A673 (cell line): ENCODE measurements at regions of chr3 and their contacts with region 1.

Region 1: GRCh38 chr3:105686278-105686897 is 182.4 kb downstream of the CBLB start:
- DNase-seq: peak; percentile 41
- H3K4me3 ChIP-seq: no peak overlapping the region
- H3K27ac ChIP-seq: no peak overlapping the region
- H3K4me1 ChIP-seq: peaks cover 27% of the 10 kb centered on the region
- H3K27me3 ChIP-seq: no peaks in the 10 kb centered on the region
- CTCF ChIP-seq: peak; percentile 91

Region 2: GRCh38 chr3:105210141-105210540 is 476.2 kb before region 1 on chr3:
- CTCF ChIA-PET with region 1: no interaction called
- POLR2A ChIA-PET with region 1: no interaction called
- intact Hi-C with region 1: no loop called
- DNase-seq: no peak
- H3K4me3 ChIP-seq: no peak overlapping the region
- H3K27ac ChIP-seq: no peak overlapping the region
- H3K4me1 ChIP-seq: no peaks in the 10 kb centered on the region
- H3K27me3 ChIP-seq: no peaks in the 10 kb centered on the region
- CTCF ChIP-seq: no peak

Region 3: DNA sequence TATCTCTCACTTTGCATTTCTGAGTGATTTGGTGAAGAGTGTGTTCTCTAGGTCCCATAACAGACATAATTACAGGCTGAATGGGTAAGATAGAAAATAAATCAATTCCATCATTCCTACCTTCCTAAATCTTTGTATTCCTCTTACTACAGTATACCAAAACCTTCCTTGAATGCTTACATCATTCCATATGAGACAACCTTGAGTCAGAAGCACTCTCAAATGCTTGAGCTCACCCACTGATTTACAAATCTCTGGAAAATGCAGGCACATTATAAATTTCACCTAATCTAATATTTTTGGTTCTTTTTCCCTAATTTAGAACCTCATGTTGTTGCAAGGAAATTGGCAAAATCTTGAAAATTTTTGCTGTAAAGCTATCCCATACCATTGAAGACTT is 56.7 kb before region 1 on chr3:
- CTCF ChIA-PET with region 1: no interaction called
- POLR2A ChIA-PET with region 1: no interaction called
- intact Hi-C with region 1: no loop called
- DNase-seq: no peak
- H3K4me3 ChIP-seq: no peak overlapping the region
- H3K27ac ChIP-seq: no peak overlapping the region
- H3K4me1 ChIP-seq: no peaks in the 10 kb centered on the region
- H3K27me3 ChIP-seq: no peaks in the 10 kb centered on the region
- CTCF ChIP-seq: no peak

Region 4: DNA sequence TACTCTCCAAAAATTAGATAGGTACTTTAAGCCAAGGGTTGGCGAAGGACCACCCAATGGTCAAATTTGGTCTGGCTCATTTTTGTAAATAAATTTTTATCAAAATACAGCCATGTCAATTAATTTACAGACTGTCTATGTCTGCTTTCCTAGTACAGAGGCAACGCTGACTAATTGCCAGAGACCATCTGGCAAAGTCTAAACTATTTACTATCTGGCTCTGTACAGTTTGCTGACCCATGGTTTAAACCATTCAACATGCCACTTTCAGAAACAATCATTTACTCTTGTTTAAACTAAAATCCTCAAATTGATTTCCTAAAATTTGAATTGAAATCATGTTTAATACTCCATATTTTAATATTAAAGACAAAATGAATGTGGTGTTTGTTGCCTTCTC is 156.6 kb after region 1 on chr3:
- CTCF ChIA-PET with region 1: no interaction called
- POLR2A ChIA-PET with region 1: no interaction called
- intact Hi-C with region 1: no loop called
- DNase-seq: no peak
- H3K4me3 ChIP-seq: no peak overlapping the region
- H3K27ac ChIP-seq: no peak overlapping the region
- H3K4me1 ChIP-seq: peaks cover 24% of the 10 kb centered on the region
- H3K27me3 ChIP-seq: no peaks in the 10 kb centered on the region
- CTCF ChIP-seq: no peak

Region 5: GRCh38 chr3:106206146-106206545 is 519.8 kb after region 1 on chr3:
- CTCF ChIA-PET with region 1: no interaction called
- POLR2A ChIA-PET with region 1: interaction called, 3 read pairs
- intact Hi-C with region 1: loop called (anchors 10 kb)
- DNase-seq: peak; percentile 94
- H3K4me3 ChIP-seq: peak overlapping the region; percentile 25
- H3K27ac ChIP-seq: peak overlapping the region; percentile 93
- H3K4me1 ChIP-seq: peaks cover 37% of the 10 kb centered on the region
- H3K27me3 ChIP-seq: no peaks in the 10 kb centered on the region
- CTCF ChIP-seq: no peak

Region 6: GRCh38 chr3:106609666-106610301 is 923.4 kb after region 1 on chr3:
- CTCF ChIA-PET with region 1: no interaction called
- POLR2A ChIA-PET with region 1: no interaction called
- intact Hi-C with region 1: loop called (anchors 1 kb)
- DNase-seq: peak; percentile 94
- H3K4me3 ChIP-seq: no peak overlapping the region
- H3K27ac ChIP-seq: peak overlapping the region; percentile 53
- H3K4me1 ChIP-seq: peaks cover 29% of the 10 kb centered on the region
- H3K27me3 ChIP-seq: no peaks in the 10 kb centered on the region
- CTCF ChIP-seq: peak; percentile 95

Region 7: GRCh38 chr3:107117922-107118536 is 1431.6 kb after region 1 on chr3:
- CTCF ChIA-PET with region 1: no interaction called
- POLR2A ChIA-PET with region 1: no interaction called
- intact Hi-C with region 1: loop called (anchors 10 kb)
- DNase-seq: peak; percentile 93
- H3K4me3 ChIP-seq: no peak overlapping the region
- H3K27ac ChIP-seq: peak overlapping the region; percentile 59
- H3K4me1 ChIP-seq: peaks cover 17% of the 10 kb centered on the region
- H3K27me3 ChIP-seq: no peaks in the 10 kb centered on the region
- CTCF ChIP-seq: peak; percentile 86